CD4-positive, alpha-beta T cell (primary cell): ENCODE measurements at regions of chr6 and their contacts with region 1.

Region 1: DNA sequence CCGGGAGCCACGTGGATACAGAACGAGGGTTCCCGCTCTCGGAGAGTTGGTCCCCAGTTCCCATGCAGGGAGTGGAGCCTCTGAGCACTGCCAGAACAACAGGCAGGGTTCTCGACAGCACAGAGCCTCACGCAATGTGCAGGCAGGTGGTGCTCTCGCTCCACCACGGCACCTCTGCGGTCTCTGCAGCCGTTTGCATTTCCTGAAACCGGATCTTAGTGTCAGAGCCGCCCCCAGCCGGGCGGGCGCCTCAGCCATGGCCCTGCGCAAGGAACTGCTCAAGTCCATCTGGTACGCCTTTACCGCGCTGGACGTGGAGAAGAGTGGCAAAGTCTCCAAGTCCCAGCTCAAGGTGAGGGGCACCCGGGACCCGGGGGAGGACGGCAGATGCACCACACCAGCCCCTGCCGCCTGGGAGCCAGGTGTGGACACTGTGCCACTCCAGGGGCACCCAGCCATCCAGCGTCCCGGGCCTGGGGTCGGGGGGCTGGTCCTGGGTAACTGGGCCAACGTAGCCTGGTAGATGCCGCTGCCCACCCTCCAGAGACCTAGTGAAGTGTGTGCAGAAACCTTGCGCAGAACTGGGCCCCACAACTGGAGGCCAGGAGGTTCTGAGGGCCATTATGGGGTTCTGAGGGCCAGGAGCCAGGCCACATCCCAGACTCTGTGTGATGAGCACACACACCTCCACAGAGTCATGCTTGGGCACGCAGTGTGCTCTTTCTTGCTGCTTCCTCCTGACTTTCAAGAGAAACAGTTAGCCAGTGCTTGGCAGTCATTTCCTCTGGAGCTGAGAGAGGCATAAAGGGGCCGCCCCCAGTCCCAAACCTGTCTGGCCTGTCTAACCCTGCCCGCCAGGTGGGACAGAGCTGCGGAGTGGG is at the start of gene DEF6:
- DNase-seq: peak; percentile 82 to 95 (median 88)
- ATAC-seq: peak; percentile 73
- H3K4me3 ChIP-seq: peak within 1 kb of the TSS; percentile 81
- H3K4me3 Mint-ChIP-seq: peak within 1 kb of the TSS; percentile 87
- H3K27ac ChIP-seq: peak within 1 kb of the TSS; percentile 88 to 91
- H3K27ac Mint-ChIP-seq: peak within 1 kb of the TSS; percentile 96
- H3K4me1 ChIP-seq: peaks cover 57% of the 10 kb centered on the region
- H3K4me1 Mint-ChIP-seq: peaks cover 57% of the 10 kb centered on the region
- H3K27me3 ChIP-seq: no peaks in the 10 kb centered on the region
- H3K27me3 Mint-ChIP-seq: no peaks in the 10 kb centered on the region
- CTCF ChIP-seq: peak; percentile 78
- total RNA-seq, gene DEF6: 209 to 212 TPM

Region 2: DNA sequence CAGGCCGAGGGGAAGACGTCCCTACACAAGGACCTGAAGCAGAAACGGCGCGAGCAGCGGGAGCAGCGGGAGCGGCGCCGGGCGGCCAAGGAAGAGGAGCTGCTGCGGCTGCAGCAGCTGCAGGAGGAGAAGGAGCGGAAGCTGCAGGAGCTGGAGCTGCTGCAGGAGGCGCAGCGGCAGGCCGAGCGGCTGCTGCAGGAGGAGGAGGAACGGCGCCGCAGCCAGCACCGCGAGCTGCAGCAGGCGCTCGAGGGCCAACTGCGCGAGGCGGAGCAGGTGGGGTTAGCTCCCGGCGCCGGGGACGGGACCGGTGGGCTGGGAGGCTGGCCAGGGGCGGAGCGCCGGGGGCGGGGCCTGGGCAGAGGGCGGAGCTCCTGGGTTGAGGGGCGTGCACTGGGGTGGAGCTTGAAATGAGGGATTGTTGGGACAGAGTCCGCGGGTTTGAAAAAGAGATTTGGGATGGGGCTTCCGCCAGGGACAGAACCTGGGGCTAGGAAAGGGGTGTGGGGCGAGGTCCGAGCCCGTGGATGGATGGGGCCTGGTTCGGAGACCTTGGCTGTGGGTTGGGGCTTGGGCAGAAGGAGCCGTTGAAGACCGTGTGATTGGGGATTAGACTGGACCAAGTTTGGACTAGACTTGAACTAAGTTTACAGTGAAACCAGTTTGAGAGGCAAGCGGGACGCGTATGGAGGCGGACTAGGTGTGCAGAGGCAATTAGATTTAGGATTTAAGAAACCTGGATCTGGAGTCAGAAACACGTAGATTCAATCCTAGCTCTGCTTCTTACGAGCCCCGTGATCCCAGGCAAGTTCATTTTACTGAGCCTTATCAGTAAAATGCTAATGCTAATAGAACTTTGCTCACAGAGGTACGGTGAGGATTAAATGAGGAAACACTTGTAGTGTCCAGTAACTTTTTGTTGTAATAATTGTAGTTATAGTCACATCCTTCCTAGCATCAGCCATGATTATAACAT is 20.6 kb after region 1 on chr6:
- CTCF ChIA-PET with region 1: interaction called, 8 read pairs
- POLR2A ChIA-PET with region 1: interaction called, 74 read pairs
- intact Hi-C with region 1: no loop called
- DNase-seq: no peak
- ATAC-seq: no peak
- H3K4me3 ChIP-seq: no peak overlapping the region
- H3K4me3 Mint-ChIP-seq: no peak overlapping the region
- H3K27ac ChIP-seq: no peak overlapping the region
- H3K27ac Mint-ChIP-seq: no peak overlapping the region
- H3K4me1 ChIP-seq: peaks cover 15% of the 10 kb centered on the region
- H3K4me1 Mint-ChIP-seq: peaks cover 61% of the 10 kb centered on the region
- H3K27me3 ChIP-seq: no peaks in the 10 kb centered on the region
- H3K27me3 Mint-ChIP-seq: no peaks in the 10 kb centered on the region
- CTCF ChIP-seq: no peak

Region 3: DNA sequence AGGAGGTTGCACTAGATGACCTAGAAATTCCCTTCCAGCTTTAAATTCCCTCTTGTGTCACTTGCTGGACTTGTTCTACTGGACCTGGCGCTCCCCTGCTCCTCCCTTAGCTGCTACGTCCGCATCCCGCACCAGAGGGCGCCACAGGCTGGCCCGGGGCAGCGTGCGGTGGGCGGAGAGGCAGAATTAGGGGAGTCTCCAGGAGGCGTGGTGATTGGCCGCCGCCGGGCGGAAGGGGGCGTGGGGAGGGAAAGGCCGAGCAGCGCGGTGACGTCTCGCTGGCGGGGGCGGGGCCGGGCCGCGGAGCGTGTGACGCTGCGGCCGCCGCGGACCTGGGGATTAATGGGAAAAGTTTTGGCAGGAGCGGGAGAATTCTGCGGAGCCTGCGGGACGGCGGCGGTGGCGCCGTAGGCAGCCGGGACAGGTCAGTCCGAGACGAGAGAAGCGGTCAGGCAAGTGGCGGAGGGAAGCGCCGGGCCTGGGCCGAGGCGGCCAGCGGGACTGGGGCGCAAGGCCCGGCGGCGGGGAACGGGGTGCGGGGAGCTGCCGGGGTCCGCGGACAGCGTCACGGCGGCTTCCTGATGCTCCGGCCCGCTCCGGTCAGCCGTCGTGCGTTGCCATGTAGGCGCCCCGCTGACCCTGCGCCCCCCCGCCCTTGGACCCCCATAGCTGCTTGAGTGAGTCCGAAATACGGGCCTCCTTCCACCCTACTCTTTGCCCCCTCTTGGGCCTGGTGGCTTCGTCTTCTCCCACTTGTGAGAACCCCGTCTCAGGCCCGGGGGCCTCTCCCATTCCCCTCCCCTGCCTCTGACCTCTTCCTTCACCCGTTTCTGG is 44.6 kb after region 1 on chr6 and contains the start of gene PPARD:
- CTCF ChIA-PET with region 1: interaction called, 23 read pairs
- POLR2A ChIA-PET with region 1: interaction called, 11 read pairs
- intact Hi-C with region 1: loop called in 1 of 2 experiments (anchors 5 kb)
- DNase-seq: peak; percentile 94 to 98 (median 97)
- ATAC-seq: peak; percentile 97
- H3K4me3 ChIP-seq: peak within 1 kb of the TSS; percentile 87
- H3K4me3 Mint-ChIP-seq: peak within 1 kb of the TSS; percentile 98
- H3K27ac ChIP-seq: peak within 1 kb of the TSS; percentile 70 to 87
- H3K27ac Mint-ChIP-seq: peak within 1 kb of the TSS; percentile 89
- H3K4me1 ChIP-seq: peaks cover 51% of the 10 kb centered on the region
- H3K4me1 Mint-ChIP-seq: peaks cover 59% of the 10 kb centered on the region
- H3K27me3 ChIP-seq: no peaks in the 10 kb centered on the region
- H3K27me3 Mint-ChIP-seq: no peaks in the 10 kb centered on the region
- CTCF ChIP-seq: peak; percentile 96
- total RNA-seq, gene PPARD: 34.1 to 37.0 TPM

Region 4: DNA sequence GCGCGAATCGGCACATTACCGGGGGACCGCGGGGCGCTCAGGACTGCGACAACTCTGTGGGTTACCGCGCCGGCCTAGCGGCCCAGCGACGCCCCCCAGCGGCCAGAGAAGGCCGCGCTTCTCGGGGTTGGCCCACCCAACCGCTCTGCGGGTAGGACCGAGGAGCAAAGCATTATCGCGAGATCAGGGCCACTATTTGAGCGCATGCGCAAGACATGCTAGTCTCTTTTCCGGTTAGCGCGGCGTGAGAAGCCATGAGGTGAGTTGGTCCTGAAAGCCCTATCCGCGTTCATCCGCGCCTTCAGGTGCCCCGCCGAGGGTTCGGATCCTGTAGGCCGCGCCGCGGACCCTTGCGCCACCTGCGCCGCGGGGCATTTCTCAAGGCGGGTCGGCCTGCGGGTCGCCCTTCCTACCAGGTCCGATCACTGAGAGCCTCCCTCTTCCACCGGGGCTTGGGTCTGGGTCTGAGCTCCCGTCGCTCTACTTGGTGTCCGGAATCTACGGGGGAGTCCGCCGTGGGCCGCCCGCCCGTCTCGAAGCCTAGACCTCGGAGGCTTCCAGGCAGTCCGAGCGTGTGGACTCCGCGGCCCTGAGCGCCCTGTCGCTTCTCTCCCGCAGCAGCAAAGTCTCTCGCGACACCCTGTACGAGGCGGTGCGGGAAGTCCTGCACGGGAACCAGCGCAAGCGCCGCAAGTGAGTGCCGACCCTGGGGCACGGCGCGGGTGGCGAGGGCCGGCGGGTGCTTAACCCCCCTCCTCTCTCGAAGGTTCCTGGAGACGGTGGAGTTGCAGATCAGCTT is 170.5 kb after region 1 on chr6 and contains the start of gene RPL10A:
- CTCF ChIA-PET with region 1: interaction called, 17 read pairs
- POLR2A ChIA-PET with region 1: interaction called, 6 read pairs
- intact Hi-C with region 1: loop called (anchors 1 kb)
- DNase-seq: peak; percentile 91 to 98 (median 96)
- ATAC-seq: peak; percentile 83
- H3K4me3 ChIP-seq: peak within 1 kb of the TSS; percentile 98
- H3K4me3 Mint-ChIP-seq: peak within 1 kb of the TSS; percentile 99
- H3K27ac ChIP-seq: peak within 1 kb of the TSS; percentile 65 to 92
- H3K27ac Mint-ChIP-seq: peak within 1 kb of the TSS; percentile 100
- H3K4me1 ChIP-seq: peaks cover 49% of the 10 kb centered on the region
- H3K4me1 Mint-ChIP-seq: peaks cover 42% of the 10 kb centered on the region
- H3K27me3 ChIP-seq: no peaks in the 10 kb centered on the region
- H3K27me3 Mint-ChIP-seq: no peaks in the 10 kb centered on the region
- CTCF ChIP-seq: peak; percentile 91
- total RNA-seq, gene RPL10A: 2,453 to 2,464 TPM

Region 5: GRCh38 chr6:35737413-35738211 is 439.8 kb after region 1 on chr6:
- CTCF ChIA-PET with region 1: no interaction called
- POLR2A ChIA-PET with region 1: interaction called, 3 read pairs
- intact Hi-C with region 1: loop called (anchors 1 to 2 kb)
- DNase-seq: peak in 3 of 14 experiments; percentile 82 to 84 (median 83)
- ATAC-seq: peak; percentile 77
- H3K4me3 ChIP-seq: no peak overlapping the region
- H3K4me3 Mint-ChIP-seq: peak overlapping the region; percentile 81
- H3K27ac ChIP-seq: no peak overlapping the region
- H3K27ac Mint-ChIP-seq: peak overlapping the region; percentile 78
- H3K4me1 ChIP-seq: peaks cover 54% of the 10 kb centered on the region
- H3K4me1 Mint-ChIP-seq: peaks cover 46% of the 10 kb centered on the region
- H3K27me3 ChIP-seq: no peaks in the 10 kb centered on the region
- H3K27me3 Mint-ChIP-seq: no peaks in the 10 kb centered on the region
- CTCF ChIP-seq: peak; percentile 78